Activated T-helper 2 cell treated with anti-CD3 and anti-CD28 coated beads, Interferon-gamma antibody, Interleukin-2, Interleukin-4, amounts not matched to agents 10 μg/mL and 5 μg/mL and 100 μg/mL, durations not matched to agents 14 hours and 24 hours and 36 hours (primary cell): ENCODE measurements at regions of chr17 and their contacts with region 1.

Region 1: GRCh38 chr17:43367737-43368242 is 31.0 kb upstream of the ARL4D start:
- DNase-seq: peak; percentile 57
- H3K4me3 Mint-ChIP-seq: peak overlapping the region; percentile 86
- H3K27ac Mint-ChIP-seq: peak overlapping the region; percentile 100
- H3K4me1 Mint-ChIP-seq: peaks cover 54% of the 10 kb centered on the region
- H3K27me3 Mint-ChIP-seq: no peaks in the 10 kb centered on the region

Region 2: DNA sequence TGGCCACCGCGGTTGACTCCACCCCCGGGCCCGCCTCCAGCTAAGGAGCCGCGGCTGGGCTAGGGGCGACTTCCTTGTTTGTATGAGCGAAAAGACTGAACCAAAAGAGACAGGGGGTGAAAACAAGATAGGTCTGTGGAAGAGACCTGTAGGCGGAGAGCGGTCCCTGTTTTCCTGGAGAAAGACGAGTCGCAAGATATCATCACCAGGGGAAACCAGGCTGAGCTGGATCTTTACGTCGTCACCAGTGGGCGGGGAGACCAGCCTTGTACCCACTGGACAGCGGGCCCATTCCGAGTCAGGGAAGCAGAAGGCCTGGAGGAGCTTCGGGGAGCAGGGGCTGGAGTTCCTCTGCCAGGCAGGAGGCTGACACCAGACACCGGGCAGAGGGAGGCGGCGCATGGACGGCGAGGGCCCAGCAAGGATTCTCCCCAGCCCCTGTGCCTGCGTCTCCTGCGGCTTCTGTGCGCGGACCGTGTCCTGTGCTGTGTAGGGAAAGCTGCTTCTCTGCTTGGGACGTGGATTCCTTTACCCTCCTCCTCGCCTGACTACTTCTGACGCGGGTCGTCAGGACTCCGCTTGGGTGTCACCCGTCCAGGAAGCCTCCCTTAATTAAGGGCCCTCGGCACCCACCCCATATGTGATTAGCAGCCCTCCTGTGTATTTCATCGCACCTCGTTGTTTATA is 20.7 kb after region 1 on chr17:
- intact Hi-C with region 1: loop called (anchors 1 kb)
- DNase-seq: peak; percentile 89
- H3K4me3 Mint-ChIP-seq: peak overlapping the region; percentile 88
- H3K27ac Mint-ChIP-seq: peak overlapping the region; percentile 94
- H3K4me1 Mint-ChIP-seq: peaks cover 20% of the 10 kb centered on the region
- H3K27me3 Mint-ChIP-seq: no peaks in the 10 kb centered on the region

Region 3: DNA sequence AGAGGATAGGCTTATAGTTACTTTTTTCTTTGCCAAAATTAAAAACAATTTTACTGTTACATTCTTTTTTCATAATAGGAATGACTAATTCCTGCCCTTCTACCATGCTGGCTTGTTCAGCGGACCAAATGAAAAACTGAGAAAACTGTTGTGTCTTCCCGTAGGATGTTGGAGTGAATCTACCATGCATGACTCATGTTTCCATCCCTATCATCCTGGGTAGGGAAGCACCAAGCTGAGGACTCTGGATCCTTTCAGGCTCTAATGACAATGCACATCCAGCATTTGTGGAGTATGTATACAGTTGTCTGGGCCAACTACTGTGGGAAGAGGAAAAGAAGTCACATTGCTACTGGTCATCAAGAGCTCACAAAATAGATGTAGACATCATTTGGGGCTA is 74.9 kb after region 1 on chr17:
- intact Hi-C with region 1: no loop called
- DNase-seq: no peak
- H3K4me3 Mint-ChIP-seq: no peak overlapping the region
- H3K27ac Mint-ChIP-seq: no peak overlapping the region
- H3K4me1 Mint-ChIP-seq: no peaks in the 10 kb centered on the region
- H3K27me3 Mint-ChIP-seq: peaks cover 5% of the 10 kb centered on the region